Keratinocyte (primary cell): ENCODE measurements at regions of chr18 and their contacts with region 1.

Region 1: DNA sequence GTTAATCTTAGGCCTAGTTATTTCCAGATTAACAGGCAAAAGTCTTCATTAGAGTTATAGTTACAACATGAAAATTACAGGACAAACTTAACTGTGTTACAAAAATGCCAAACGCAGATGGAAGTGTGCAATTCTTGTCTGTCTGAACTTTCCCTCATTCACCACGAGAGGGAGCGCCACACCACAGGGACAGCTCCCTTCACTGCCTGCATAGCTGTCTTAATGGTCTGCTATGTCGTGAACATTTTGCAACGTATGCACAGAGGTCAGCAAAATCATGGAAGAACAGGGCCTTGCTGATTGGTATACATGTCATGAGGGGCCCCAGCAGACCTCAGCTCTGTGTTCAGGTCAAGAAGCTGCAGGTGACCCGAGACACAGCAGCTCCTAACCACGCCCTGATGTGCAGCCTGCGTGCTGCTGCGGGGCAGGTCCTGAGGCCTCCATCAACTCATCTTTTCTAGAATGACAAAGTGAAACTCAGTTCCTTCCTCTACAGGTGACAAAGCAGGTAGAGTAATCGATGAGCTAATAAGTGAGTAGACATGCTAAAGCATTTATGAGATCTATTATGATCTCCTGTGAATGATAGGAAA is 78.8 kb upstream of the ATP8B1 start:
- DNase-seq: no peak
- H3K4me3 ChIP-seq: no peak overlapping the region
- H3K27ac ChIP-seq: no peak overlapping the region
- H3K4me1 ChIP-seq: peaks cover 4% of the 10 kb centered on the region
- H3K27me3 ChIP-seq: no peaks in the 10 kb centered on the region
- CTCF ChIP-seq: peak; percentile 87 to 100 (median 94)

Region 2: GRCh38 chr18:58043491-58044379 is 161.8 kb after region 1 on chr18 and contains the start of gene NEDD4L:
- dilution Hi-C with region 1: loop called (anchors 25 kb)
- DNase-seq: peak; percentile 45
- H3K4me3 ChIP-seq: peak within 1 kb of the TSS; percentile 51 to 86 (median 69)
- H3K27ac ChIP-seq: peak within 1 kb of the TSS; percentile 84
- H3K4me1 ChIP-seq: peaks cover 26% of the 10 kb centered on the region
- H3K27me3 ChIP-seq: no peaks in the 10 kb centered on the region
- CTCF ChIP-seq: peak; percentile 53 to 95 (median 95)
- polyA plus RNA-seq, gene NEDD4L: 27.3 to 80.8 TPM (median 52.6 TPM) in 3 replicates